ENCODE measurements at regions of chr1 and their contacts with region 1.

Region 1: DNA sequence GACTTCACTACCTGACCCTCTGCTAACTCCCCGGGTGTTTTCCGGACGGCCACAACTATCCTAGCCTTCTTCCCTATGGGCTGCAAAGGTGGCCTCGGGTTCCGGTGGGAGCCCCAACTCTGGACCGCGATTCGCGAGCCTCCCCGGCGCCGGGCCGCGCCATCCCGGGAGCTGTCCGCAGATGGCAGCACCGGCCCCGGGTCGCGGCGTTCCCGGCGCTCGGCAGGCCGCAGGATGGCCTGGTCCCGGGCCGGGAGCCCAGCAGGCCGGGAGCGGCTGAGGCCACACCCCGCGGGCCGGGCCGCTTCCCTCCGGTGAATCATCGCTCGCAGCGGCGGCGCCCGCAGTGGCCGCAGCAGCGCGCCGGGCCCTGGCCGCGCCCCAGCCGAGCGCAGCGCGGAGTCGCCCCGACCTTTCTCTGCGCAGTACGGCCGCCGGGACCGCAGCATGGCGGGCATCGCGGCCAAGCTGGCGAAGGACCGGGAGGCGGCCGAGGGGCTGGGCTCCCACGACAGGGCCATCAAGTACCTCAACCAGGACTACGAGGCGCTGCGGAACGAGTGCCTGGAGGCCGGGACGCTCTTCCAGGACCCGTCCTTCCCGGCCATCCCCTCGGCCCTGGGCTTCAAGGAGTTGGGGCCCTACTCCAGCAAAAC is at the start of gene CAPN2:
- DNase-seq: peak; percentile 54
- ATAC-seq: peak; percentile 54
- H3K4me3 Mint-ChIP-seq: peak within 1 kb of the TSS; percentile 86
- H3K27ac Mint-ChIP-seq: peak within 1 kb of the TSS; percentile 81
- H3K4me1 Mint-ChIP-seq: peaks cover 51% of the 10 kb centered on the region
- H3K27me3 Mint-ChIP-seq: no peaks in the 10 kb centered on the region
- CTCF ChIP-seq: peak; percentile 51
- total RNA-seq, gene CAPN2: 31.5 to 33.6 TPM

Region 2: GRCh38 chr1:223180731-223181321 is 531.5 kb before region 1 on chr1:
- CTCF ChIA-PET with region 1: no interaction called
- POLR2A ChIA-PET with region 1: no interaction called
- intact Hi-C with region 1: no loop called
- DNase-seq: no peak
- ATAC-seq: no peak
- H3K4me3 Mint-ChIP-seq: no peak overlapping the region
- H3K27ac Mint-ChIP-seq: no peak overlapping the region
- H3K4me1 Mint-ChIP-seq: peaks cover 20% of the 10 kb centered on the region
- H3K27me3 Mint-ChIP-seq: peaks cover 3% of the 10 kb centered on the region
- CTCF ChIP-seq: no peak

Region 3: GRCh38 chr1:223726380-223727001 is 14.2 kb after region 1 on chr1:
- CTCF ChIA-PET with region 1: interaction called, 8 read pairs
- POLR2A ChIA-PET with region 1: interaction called, 11 read pairs
- intact Hi-C with region 1: no loop called
- DNase-seq: peak; percentile 97
- ATAC-seq: peak; percentile 97
- H3K4me3 Mint-ChIP-seq: peak overlapping the region; percentile 34
- H3K27ac Mint-ChIP-seq: peak overlapping the region; percentile 93
- H3K4me1 Mint-ChIP-seq: peaks cover 60% of the 10 kb centered on the region
- H3K27me3 Mint-ChIP-seq: no peaks in the 10 kb centered on the region
- CTCF ChIP-seq: no peak

Region 4: GRCh38 chr1:223831755-223832636 is 119.7 kb after region 1 on chr1:
- CTCF ChIA-PET with region 1: no interaction called
- POLR2A ChIA-PET with region 1: no interaction called
- intact Hi-C with region 1: loop called (anchors 10 kb)
- DNase-seq: no peak
- ATAC-seq: peak; percentile 69
- H3K4me3 Mint-ChIP-seq: peak overlapping the region; percentile 66
- H3K27ac Mint-ChIP-seq: peak overlapping the region; percentile 97
- H3K4me1 Mint-ChIP-seq: peaks cover 22% of the 10 kb centered on the region
- H3K27me3 Mint-ChIP-seq: no peaks in the 10 kb centered on the region
- CTCF ChIP-seq: no peak

Region 5: DNA sequence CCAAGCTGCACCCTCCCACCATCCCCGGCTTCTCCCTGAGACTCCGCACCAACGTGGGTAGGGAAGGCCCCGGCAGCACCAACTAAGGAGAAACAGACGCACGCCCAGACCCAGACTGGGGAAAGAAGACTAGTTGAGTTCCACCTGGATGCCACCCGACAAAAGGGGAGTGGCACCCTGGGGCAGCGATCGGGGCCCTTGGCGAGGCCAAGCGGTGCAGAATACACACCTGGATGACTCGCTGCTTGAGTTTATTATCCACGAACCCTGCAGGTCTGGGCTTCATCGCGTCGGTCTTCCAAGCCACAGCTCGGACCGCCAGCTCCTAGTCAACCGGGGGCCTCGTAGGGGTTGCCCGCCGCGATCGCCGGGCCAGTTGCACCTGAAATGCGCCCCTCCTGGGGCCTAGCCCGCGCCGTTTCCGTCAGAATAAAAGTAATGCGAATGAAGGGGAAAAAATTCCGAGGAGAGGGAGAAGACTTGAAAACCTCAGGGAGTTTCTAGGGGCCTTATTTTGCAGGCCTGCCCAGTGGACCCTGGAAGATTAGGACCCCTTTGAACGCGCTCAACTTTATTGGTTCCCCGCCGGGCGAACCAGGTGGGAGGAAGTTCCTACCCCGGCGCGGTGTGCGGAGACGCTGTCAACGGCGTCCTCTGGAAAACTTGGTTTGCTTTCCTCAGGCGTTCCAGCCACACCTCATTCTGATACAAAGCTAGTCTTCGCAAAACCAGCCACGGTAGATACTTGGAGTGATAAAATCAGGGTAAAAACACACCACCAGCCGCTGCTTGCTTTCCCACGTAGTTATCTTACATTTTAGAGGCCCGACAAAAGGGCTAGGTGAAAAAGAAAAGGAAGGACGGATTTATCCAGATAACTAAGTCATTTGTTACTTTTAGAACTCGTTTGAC is 617.8 kb after region 1 on chr1 and contains the start of gene NVL:
- CTCF ChIA-PET with region 1: no interaction called
- POLR2A ChIA-PET with region 1: no interaction called
- intact Hi-C with region 1: loop called (anchors 10 kb)
- DNase-seq: peak; percentile 85
- ATAC-seq: peak; percentile 88
- H3K4me3 Mint-ChIP-seq: peak within 1 kb of the TSS; percentile 88
- H3K27ac Mint-ChIP-seq: peak within 1 kb of the TSS; percentile 99
- H3K4me1 Mint-ChIP-seq: peaks cover 40% of the 10 kb centered on the region
- H3K27me3 Mint-ChIP-seq: no peaks in the 10 kb centered on the region
- CTCF ChIP-seq: no peak
- total RNA-seq, gene NVL: 37.7 to 40.4 TPM

Measured in activated CD8-positive, alpha-beta T cell treated with anti-CD3 and anti-CD28 coated beads for 36 hours (primary cell).